KBM-7 (cell line): ENCODE measurements at regions of chr1 and their contacts with region 1.

Region 1: GRCh38 chr1:209576798-209577197 is 6.7 kb upstream of the CAMK1G start:
- DNase-seq: peak; percentile 55

Region 2: DNA sequence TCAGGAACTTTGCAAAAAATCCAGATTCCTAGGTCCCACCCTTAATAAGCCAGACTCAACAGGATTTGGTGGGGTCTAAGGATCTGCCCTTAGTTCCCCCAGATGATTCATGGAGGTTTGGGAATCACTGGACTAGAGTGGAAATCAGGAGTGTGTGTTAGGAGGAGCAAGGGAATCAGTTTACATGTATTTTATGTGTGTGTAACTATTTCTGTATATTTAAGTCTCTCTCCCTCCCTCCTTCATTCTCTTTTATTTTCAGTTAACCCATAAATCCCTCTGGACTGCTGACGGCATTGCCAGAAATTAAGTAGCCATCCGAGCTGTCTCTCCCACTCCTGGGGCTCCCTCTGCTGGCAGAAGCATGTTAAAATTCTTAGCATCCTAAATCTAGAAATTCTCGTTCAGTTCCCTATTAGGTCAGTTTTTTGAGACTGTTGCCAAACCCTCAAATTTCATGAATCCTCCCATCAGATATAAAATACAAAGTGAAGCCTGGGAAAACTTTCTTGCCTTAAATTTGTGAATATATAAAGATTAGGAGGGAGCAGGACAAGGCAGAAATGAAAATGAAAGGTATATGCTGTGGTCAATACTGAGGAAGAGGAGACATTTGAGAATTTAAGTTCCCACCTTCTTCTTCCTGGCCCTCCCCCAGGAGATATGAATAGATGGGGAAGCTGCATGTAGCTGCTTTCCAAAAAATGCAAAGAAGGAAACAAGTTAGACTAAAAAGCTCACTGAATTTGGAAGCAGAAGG is 116.1 kb after region 1 on chr1:
- in situ Hi-C with region 1: loop called (anchors 25 kb)
- DNase-seq: peak; percentile 68